Activated CD4-positive, alpha-beta memory T cell treated with anti-CD3 and anti-CD28 coated beads for 36 hours (primary cell): ENCODE measurements at regions of chrX and their contacts with region 1.

Region 1: GRCh38 chrX:43958529-43958928 is 14.7 kb downstream of the NDP start:
- DNase-seq: peak; percentile 9
- H3K4me3 Mint-ChIP-seq: no peak overlapping the region
- H3K27ac Mint-ChIP-seq: no peak overlapping the region
- H3K4me1 Mint-ChIP-seq: no peaks in the 10 kb centered on the region
- H3K27me3 Mint-ChIP-seq: no peaks in the 10 kb centered on the region

Region 2: GRCh38 chrX:43255596-43255995 is 702.9 kb before region 1 on chrX:
- CTCF ChIA-PET with region 1: no interaction called
- POLR2A ChIA-PET with region 1: no interaction called
- intact Hi-C with region 1: no loop called
- DNase-seq: no peak
- H3K4me3 Mint-ChIP-seq: no peak overlapping the region
- H3K27ac Mint-ChIP-seq: no peak overlapping the region
- H3K4me1 Mint-ChIP-seq: no peaks in the 10 kb centered on the region
- H3K27me3 Mint-ChIP-seq: no peaks in the 10 kb centered on the region

Region 3: DNA sequence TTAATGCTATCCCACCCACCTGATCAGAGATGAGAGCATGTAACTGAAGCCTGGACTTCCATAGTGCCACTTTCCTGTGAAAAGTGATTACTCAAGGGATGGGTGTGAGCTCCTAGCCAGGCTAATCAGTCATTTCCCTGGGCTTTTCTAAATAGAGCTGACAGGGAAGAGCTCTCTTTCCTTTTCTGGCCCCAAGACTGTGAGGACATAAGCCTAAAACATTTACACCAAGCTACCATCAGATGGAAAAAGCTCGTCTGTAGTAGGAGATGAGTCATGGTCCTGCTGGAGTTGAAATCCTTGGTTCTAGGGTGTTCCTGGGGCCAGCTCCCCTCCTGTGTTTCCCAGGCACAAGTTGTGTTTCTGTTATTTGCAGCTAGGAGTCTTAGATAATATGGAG is 67.0 kb after region 1 on chrX:
- CTCF ChIA-PET with region 1: interaction called, 32 read pairs
- POLR2A ChIA-PET with region 1: no interaction called
- intact Hi-C with region 1: loop called (anchors 5 kb)
- DNase-seq: no peak
- H3K4me3 Mint-ChIP-seq: no peak overlapping the region
- H3K27ac Mint-ChIP-seq: no peak overlapping the region
- H3K4me1 Mint-ChIP-seq: no peaks in the 10 kb centered on the region
- H3K27me3 Mint-ChIP-seq: no peaks in the 10 kb centered on the region

Region 4: GRCh38 chrX:44244008-44244407 is 285.5 kb after region 1 on chrX:
- CTCF ChIA-PET with region 1: interaction called, 54 read pairs
- POLR2A ChIA-PET with region 1: no interaction called
- intact Hi-C with region 1: loop called (anchors 1 kb)
- DNase-seq: no peak
- H3K4me3 Mint-ChIP-seq: no peak overlapping the region
- H3K27ac Mint-ChIP-seq: no peak overlapping the region
- H3K4me1 Mint-ChIP-seq: peaks cover 14% of the 10 kb centered on the region
- H3K27me3 Mint-ChIP-seq: no peaks in the 10 kb centered on the region

Region 5: GRCh38 chrX:44542567-44543325 is 584.2 kb after region 1 on chrX and contains the start of gene FUNDC1:
- CTCF ChIA-PET with region 1: interaction called, 7 read pairs
- POLR2A ChIA-PET with region 1: no interaction called
- intact Hi-C with region 1: loop called (anchors 5 kb)
- DNase-seq: peak; percentile 93
- H3K4me3 Mint-ChIP-seq: peak within 1 kb of the TSS; percentile 84
- H3K27ac Mint-ChIP-seq: peak within 1 kb of the TSS; percentile 74
- H3K4me1 Mint-ChIP-seq: peaks cover 23% of the 10 kb centered on the region
- H3K27me3 Mint-ChIP-seq: no peaks in the 10 kb centered on the region
- total RNA-seq, gene FUNDC1: 10.3 to 10.5 TPM